ENCODE measurements at regions of chr13 and their contacts with region 1.

Region 1: DNA sequence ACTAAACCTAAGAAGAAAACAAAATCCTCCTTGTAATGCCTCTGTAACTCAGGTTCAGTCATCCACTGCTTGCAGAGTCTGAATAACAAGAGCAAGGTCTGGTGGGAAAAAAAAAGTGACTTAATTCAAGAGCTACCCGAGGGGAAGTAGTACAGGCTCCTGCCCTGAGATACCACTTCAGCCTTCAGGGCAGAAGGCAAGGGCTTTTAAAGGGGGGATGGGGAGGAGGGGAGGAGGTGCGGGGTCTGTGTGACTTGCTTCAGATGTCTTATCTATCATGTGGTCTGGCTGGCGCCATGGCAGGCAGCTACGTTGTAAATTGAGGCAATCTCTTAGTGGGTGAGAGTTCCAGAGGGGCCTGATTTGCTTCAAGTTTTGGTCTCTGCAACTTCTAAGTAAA is 66.7 kb downstream of the LRRC63 start:
- DNase-seq: no peak
- H3K4me3 ChIP-seq: no peak overlapping the region
- H3K27me3 ChIP-seq: 0 out of 2 replicates have a peak, but pooled peaks cover 2% of the 10 kb centered on the region
- CTCF ChIP-seq: no peak

Region 2: DNA sequence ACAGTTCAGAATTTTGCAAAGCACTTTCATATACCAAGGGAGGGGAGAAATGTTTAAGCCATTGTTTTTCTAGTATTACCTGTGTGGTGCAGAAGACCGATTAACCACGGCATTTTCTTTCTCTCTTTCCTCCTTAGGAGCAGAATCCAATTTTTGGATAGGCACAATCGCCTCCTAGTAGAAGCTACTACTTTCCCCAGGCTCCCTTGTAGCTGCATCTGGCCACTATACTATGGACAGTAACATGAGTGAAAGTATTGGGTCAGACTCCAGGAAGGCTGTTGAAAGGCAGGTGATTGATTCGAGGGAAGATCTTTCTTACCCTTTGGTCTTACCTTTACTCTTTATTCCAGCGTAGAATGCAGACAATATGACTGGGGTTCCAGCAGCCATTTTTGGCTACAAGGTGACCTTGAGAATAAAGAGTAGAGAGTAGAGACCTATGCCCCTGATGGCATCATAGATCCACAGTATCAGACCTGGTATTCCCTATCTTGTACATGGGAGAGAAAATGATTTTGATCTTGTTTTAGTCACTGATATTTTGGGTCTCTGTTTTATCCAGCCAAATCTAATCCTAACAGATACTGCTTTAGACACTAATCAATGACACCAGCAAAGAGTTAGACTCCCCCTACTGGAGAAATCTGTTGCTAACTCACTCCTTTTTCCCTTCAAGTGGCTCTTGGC is 10.2 kb after region 1 on chr13:
- CTCF ChIA-PET with region 1: interaction called, 11 read pairs
- POLR2A ChIA-PET with region 1: no interaction called
- DNase-seq: no peak
- H3K4me3 ChIP-seq: no peak overlapping the region
- H3K27me3 ChIP-seq: no peaks in the 10 kb centered on the region
- CTCF ChIP-seq: peak; percentile 83

Measured in BJ (cell line).